Calu3 (cell line): ENCODE measurements at regions of chr5 and their contacts with region 1.

Region 1: DNA sequence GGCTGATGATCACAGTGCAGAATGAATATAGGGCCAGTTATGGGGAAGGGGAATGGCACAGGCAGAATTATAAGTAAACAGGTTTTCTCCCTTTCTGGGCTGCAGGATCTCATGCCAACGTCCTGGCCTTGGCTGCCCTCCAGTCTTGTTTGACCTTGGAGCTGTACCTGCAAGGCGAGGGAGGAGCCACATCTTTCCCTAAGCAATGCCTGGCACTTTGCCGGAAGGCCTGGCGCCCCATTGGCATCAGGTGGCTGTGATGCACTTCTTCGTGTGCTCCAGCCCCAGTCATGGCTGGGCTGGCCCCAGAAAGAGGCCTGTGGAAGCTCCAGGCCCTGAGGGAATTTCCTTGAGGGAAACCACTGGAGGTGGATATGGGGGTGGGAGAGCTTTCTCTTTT is 16.7 kb upstream of the IQGAP2 start:
- DNase-seq: peak; percentile 31
- H3K4me3 Mint-ChIP-seq: no peak overlapping the region
- H3K27ac Mint-ChIP-seq: no peak overlapping the region
- H3K4me1 Mint-ChIP-seq: peaks cover 33% of the 10 kb centered on the region
- H3K27me3 Mint-ChIP-seq: no peaks in the 10 kb centered on the region
- CTCF ChIP-seq: no peak

Region 2: DNA sequence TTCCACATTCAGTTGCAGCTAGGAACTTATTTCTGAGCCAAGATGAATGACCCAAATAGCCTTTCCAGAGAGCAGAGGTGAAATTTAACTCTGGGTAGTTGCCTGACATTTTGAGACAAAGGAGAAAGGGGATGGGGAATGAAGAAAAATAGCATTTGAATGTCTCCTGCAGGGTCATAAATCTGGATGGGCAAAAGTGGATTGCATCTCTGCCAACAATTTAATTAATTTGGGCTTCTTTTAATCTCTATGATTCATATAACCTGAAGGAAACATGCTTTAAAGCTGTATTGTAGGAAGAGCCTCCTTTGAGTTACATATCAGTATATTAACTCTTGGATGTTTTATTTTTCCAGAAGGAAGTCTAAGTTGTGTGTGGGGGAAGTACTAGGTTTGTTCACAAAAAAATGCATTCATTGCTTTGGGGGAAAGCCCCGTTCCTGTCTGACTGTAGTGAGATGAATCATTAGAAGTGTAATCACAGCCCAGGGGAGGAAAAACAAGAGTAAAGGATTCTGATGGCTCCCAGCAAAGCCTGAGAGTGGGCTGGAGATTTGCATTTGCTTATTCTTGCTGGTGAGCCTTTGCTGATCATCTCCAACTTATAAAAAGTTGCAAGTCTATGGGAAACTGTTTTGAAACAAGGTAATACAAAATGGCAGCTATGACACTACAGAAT is 116.3 kb before region 1 on chr5:
- CTCF ChIA-PET with region 1: no interaction called
- intact Hi-C with region 1: loop called (anchors 5 kb)
- DNase-seq: peak; percentile 55
- H3K4me3 Mint-ChIP-seq: no peak overlapping the region
- H3K27ac Mint-ChIP-seq: peak overlapping the region; percentile 77
- H3K4me1 Mint-ChIP-seq: peaks cover 40% of the 10 kb centered on the region
- H3K27me3 Mint-ChIP-seq: peaks cover 9% of the 10 kb centered on the region
- CTCF ChIP-seq: no peak

Region 3: GRCh38 chr5:76560952-76561891 is 174.9 kb after region 1 on chr5:
- CTCF ChIA-PET with region 1: no interaction called
- intact Hi-C with region 1: no loop called
- DNase-seq: no peak
- H3K4me3 Mint-ChIP-seq: no peak overlapping the region
- H3K27ac Mint-ChIP-seq: no peak overlapping the region
- H3K4me1 Mint-ChIP-seq: no peaks in the 10 kb centered on the region
- H3K27me3 Mint-ChIP-seq: peaks cover 8% of the 10 kb centered on the region
- CTCF ChIP-seq: no peak